Right ventricle myocardium inferior (tissue), 1 donor: ENCODE measurements at regions of chr10 and their contacts with region 1.

Region 1: GRCh38 chr10:93916257-93917063 is 22.7 kb downstream of the SLC35G1 start:
- DNase-seq: no peak
- ATAC-seq: no peak

Region 2: DNA sequence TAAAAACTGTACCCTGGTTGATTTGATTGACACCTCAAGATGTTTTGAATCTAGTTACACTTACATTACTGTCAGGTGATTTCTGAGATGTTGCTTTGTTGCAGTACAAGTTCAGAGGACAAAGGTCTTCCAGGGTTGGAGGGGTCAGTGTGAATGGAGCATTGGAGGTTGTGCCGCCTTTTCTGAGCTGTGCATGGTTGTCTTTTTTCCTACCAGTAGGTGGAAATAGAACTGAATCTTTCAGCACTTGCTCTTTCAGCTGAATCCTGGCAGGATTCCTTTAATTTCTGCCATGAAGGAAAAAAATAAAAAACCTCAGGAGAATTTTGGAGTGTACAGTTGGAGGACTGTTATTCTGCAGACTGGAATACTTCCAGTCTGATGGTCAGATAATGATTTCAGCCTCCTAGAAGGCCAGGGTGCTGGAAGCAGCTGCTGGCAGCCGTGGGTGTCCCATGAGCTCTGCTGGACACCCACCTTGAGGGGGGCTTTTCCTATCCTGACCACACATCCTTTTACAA is 159.9 kb after region 1 on chr10:
- intact Hi-C with region 1: loop called (anchors 5 kb)
- DNase-seq: no peak
- ATAC-seq: peak; percentile 86

Region 3: GRCh38 chr10:94264085-94264484 is 347.6 kb after region 1 on chr10:
- intact Hi-C with region 1: no loop called
- DNase-seq: no peak
- ATAC-seq: no peak

Region 4: DNA sequence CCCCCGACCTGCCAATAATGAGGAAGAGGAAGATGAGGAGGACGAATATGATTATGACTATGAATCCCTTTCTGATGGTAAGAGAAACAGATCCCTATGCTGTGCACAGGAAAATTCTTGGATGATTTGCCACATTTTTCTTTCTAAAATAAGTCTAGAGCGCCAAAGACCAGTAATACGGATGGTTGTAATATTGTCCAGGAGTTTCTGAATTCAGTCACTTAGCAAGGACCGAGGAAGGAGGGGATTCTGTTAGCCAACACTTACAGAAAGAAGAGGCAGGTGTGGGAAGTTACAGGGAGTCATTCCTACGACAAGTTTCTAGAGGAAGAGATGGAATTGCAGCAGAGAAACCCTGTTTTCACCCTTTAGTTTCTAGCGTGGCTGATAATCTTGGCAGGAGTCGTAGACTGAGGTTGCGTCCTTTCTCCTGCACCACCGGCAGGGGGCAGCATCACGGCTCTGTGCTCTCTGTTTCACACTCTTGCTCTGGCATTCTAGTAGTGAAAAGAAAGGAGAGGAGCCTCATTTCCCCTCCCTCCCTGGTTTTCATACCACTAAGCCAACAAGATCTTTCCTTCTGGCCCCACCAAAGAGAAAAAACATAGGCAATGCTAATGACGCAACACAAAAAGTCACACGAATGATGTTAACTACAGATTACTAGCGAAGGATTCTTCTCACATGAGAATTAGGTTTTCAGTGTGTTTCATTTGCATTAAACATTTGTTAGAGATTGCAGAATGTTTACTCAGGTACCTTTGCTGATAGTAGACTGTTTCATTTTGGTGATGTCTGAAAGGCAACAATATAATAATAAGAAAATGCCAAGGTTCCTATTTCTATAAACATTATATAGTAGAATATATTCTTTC is 363.6 kb after region 1 on chr10:
- intact Hi-C with region 1: no loop called
- DNase-seq: no peak
- ATAC-seq: peak; percentile 75

Region 5: DNA sequence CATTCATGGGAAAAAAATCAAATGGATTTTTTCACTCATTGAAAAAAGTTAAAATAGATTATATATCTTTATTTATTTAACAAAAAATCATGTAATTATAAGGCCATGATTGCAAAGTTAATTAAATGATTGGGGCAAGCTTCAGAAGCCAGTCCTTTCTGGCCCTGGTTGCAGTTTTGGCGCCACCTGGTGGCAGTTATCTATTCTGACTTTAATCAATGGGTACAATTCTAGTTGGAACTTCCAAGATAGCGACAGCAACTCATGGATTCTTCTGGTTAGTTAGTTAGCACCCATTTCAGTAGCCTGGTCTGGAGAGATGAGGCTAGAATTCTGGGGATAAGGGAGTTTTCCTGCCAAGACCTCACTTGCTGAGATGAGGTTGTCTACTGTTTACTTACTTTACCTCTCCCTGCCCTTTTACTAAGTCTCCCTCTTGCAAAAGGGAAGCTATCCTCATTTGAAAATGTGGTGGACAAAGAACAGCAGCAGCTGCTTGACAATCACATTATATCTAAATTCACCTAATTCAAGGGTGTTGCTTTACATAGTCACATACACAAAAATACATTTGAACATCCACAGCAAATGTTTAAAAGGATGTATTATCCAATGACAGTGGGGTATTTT is 403.9 kb after region 1 on chr10:
- intact Hi-C with region 1: loop called (anchors 1 kb)
- DNase-seq: no peak
- ATAC-seq: peak; percentile 26

Region 6: DNA sequence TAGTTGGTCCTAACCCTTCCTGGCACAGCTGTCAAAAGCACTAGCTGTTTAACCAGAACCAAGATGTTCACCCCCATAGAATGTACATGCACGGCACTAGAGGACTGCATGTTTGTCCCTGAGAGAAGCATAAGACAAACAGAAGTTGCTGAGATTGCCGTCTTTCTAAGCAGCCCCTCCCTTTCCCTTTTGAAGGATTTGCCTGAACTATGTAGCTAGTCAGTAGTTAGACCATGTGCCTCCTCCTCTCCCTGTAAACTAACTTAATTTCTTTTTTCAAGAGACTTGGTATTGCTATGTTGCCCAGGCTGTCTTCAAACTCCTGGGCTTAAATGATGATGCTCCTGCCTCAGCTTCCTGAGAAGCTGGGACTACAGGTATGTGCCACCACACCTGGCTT is 526.6 kb after region 1 on chr10:
- intact Hi-C with region 1: loop called (anchors 10 kb)
- DNase-seq: no peak
- ATAC-seq: no peak

Region 7: DNA sequence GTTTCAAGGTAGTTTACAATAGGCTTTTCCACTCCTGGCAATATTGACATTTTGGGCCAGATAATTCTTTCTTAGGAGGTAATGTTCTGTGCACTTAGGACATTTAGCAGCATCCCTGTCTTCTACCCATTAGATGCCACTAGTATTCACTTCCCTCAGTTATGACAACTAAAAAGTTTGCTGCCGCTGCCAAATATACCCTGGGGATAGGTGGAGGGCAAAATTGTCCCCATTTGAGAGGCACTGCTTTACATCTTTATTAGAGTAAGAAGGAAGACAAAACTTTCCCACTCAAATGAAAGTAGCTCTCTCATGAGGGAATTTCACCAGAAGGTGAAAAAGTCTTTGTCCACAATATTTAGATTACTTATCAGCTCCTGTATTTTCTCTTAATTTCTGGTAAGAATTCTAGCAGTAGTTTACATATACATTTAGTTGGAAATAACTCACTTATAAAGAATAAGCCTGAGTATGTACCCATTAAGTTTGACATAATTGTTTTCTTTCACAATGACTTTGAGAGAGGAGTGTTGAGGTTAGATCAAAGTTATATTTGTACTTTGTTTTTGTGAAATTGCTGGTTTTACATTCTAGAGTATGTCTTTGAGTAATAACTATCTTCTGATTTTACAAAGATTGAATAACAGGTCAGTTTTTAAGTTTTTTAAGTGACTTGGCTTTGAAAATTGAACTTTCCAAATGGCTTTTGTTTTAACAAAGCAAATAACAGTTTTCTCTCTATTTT is 675.2 kb after region 1 on chr10:
- intact Hi-C with region 1: no loop called
- DNase-seq: no peak
- ATAC-seq: no peak